ENCODE measurements at regions of chr4 and their contacts with region 1.

Region 1: GRCh38 chr4:169619959-169620879 is at the start of gene CLCN3:
- DNase-seq: peak; percentile 95
- ATAC-seq: peak; percentile 93
- H3K4me3 Mint-ChIP-seq: peak within 1 kb of the TSS; percentile 100
- H3K27ac Mint-ChIP-seq: peak within 1 kb of the TSS; percentile 100
- H3K4me1 Mint-ChIP-seq: peaks cover 56% of the 10 kb centered on the region
- H3K27me3 Mint-ChIP-seq: no peaks in the 10 kb centered on the region
- total RNA-seq, gene CLCN3: 21.5 to 22.8 TPM

Region 2: DNA sequence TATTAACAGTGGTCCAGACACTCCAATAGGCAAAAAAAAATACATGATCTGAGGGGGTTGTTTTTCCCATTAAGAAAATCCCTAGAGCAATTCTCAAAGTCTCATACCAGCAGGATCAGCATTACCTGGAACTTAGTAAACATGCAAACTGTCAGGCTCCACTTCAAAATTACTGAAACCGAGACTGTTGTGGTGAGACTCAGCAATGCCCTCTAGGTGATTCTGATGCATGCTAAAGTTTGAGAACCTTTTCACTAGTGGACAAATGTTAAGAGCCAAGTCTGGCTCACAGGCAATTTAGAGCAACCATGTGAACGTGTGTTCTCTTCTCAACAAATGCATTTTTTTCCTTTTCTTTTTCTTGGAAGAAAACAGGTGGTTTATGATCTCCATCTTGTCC is 38.0 kb before region 1 on chr4:
- CTCF ChIA-PET with region 1: no interaction called
- DNase-seq: no peak
- ATAC-seq: peak; percentile 49
- H3K4me3 Mint-ChIP-seq: no peak overlapping the region
- H3K27ac Mint-ChIP-seq: peak overlapping the region; percentile 57
- H3K4me1 Mint-ChIP-seq: peaks cover 8% of the 10 kb centered on the region
- H3K27me3 Mint-ChIP-seq: no peaks in the 10 kb centered on the region

Region 3: DNA sequence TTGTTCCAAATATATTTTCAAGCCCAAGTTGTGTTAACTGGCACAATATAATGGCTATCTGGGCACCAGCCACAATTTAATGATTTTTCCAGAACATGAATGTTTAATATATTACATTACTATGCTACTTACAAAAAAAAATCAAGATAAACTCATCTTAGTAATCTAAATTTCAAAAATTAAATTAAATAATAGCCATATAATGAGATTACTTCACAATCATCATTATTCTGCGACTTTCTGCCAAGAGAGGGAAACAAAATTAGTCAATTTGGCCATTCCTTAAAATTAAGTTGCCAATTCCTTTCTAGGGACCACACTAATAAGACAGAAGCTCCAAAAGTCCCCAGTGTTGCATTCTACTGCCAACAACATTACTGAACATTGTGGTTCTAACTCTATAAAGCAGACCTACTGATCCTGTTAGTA is 15.3 kb before region 1 on chr4:
- CTCF ChIA-PET with region 1: interaction called, 10 read pairs
- DNase-seq: no peak
- ATAC-seq: no peak
- H3K4me3 Mint-ChIP-seq: no peak overlapping the region
- H3K27ac Mint-ChIP-seq: peak overlapping the region; percentile 76
- H3K4me1 Mint-ChIP-seq: peaks cover 41% of the 10 kb centered on the region
- H3K27me3 Mint-ChIP-seq: no peaks in the 10 kb centered on the region

Region 4: GRCh38 chr4:169659716-169660670 is 39.8 kb after region 1 on chr4:
- CTCF ChIA-PET with region 1: interaction called, 11 read pairs
- DNase-seq: peak; percentile 84
- ATAC-seq: peak; percentile 98
- H3K4me3 Mint-ChIP-seq: peak overlapping the region; percentile 68
- H3K27ac Mint-ChIP-seq: peak overlapping the region; percentile 90
- H3K4me1 Mint-ChIP-seq: peaks cover 22% of the 10 kb centered on the region
- H3K27me3 Mint-ChIP-seq: no peaks in the 10 kb centered on the region

Measured in activated CD8-positive, alpha-beta memory T cell treated with anti-CD3 and anti-CD28 coated beads, Interleukin-2, amount 10 ng/mL, durations not matched to agents 7 days and 5 days (primary cell).